HepG2 (cell line): ENCODE measurements at regions of chr10 and their contacts with region 1.

Region 1: DNA sequence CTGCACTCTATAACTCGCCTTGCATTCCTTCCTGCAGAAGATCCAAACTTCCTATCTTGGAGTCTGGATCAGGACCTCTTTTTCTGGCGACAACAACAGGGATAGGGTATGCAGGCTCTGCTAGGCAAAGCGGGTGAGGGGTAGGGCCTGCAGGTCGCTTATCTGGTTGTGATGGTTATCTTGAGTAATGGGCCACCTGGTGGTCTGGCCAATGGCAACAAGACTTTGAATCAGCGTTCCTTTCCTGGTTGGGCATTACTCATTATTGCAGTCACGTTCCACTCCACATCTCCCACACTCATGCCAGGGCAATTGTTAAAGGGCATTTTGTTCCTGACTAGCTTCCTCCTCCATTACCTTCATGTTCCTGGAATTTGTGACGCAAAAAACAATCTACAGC is 48.4 kb upstream of the PLXDC2 start:
- DNase-seq: no peak
- ATAC-seq: no peak
- H3K4me3 ChIP-seq: no peak overlapping the region
- H3K27ac ChIP-seq: no peak overlapping the region
- H3K4me1 ChIP-seq: no peaks in the 10 kb centered on the region
- H3K27me3 ChIP-seq: no peaks in the 10 kb centered on the region
- CTCF ChIP-seq: peak; percentile 24; the same call in 1 of the 2 replicates
- EP300 ChIP-seq: no peak
- POLR2A ChIP-seq: no peak
- RAD21 ChIP-seq: no peak

Region 2: GRCh38 chr10:19782430-19783089 is 14.7 kb after region 1 on chr10:
- CTCF ChIA-PET with region 1: no interaction called
- POLR2A ChIA-PET with region 1: no interaction called
- in situ Hi-C with region 1: no loop called
- intact Hi-C with region 1: loop called (anchors 2 kb)
- DNase-seq: peak; percentile 94
- ATAC-seq: peak; percentile 100
- H3K4me3 ChIP-seq: no peak overlapping the region; a peak in 1 of 6 replicates
- H3K27ac ChIP-seq: peak overlapping the region; percentile 61
- H3K4me1 ChIP-seq: peaks cover 25% of the 10 kb centered on the region
- H3K27me3 ChIP-seq: no peaks in the 10 kb centered on the region
- CTCF ChIP-seq: no peak
- EP300 ChIP-seq: peak in 1 of 2 experiments; percentile 38; a peak in 2 of 4 replicates
- POLR2A ChIP-seq: no peak
- RAD21 ChIP-seq: no peak